ENCODE measurements at regions of chr2 and their contacts with region 1.

Region 1: GRCh38 chr2:135960656-135961551 is 24.5 kb downstream of the DARS1 start:
- DNase-seq: peak; percentile 16
- H3K4me3 Mint-ChIP-seq: peak overlapping the region; percentile 28
- H3K27ac Mint-ChIP-seq: peak overlapping the region; percentile 80
- H3K4me1 Mint-ChIP-seq: peaks cover 55% of the 10 kb centered on the region
- H3K27me3 Mint-ChIP-seq: no peaks in the 10 kb centered on the region

Region 2: DNA sequence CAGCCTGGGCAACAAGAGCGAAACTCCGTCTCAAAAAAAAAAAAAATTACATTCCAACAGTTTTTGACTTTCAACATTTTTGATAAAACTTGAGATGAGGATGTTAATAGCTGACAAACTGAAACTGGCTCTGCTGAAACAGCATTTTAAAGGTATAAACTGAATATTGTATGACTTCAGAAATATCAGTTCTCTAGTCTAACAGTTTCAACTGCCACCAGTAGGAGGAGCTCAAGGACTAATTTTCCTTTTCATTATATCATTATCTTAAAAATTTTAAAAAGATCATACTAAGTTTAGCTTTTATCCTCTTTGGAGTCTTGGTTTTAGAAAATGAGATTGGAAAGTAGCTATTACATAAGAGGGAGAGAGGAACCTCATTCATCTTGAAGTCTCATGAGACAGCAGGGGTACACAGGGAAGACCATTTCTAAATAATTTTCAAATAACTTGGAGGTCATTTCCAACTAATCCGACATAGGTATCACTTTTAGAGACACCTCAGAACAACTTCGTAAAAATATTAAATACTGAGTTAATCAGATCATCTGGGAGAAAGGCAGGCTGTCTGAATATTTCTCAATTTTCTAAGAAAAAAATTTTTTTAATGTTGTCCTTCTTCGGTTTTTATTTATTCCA is 47.1 kb before region 1 on chr2:
- intact Hi-C with region 1: loop called (anchors 2 kb)
- DNase-seq: no peak
- H3K4me3 Mint-ChIP-seq: no peak overlapping the region
- H3K27ac Mint-ChIP-seq: no peak overlapping the region
- H3K4me1 Mint-ChIP-seq: peaks cover 27% of the 10 kb centered on the region
- H3K27me3 Mint-ChIP-seq: no peaks in the 10 kb centered on the region

Region 3: GRCh38 chr2:135948642-135949355 is 12.1 kb before region 1 on chr2:
- intact Hi-C with region 1: loop called (anchors 1 kb)
- DNase-seq: no peak
- H3K4me3 Mint-ChIP-seq: peak overlapping the region; percentile 53
- H3K27ac Mint-ChIP-seq: peak overlapping the region; percentile 87
- H3K4me1 Mint-ChIP-seq: peaks cover 58% of the 10 kb centered on the region
- H3K27me3 Mint-ChIP-seq: no peaks in the 10 kb centered on the region

Measured in activated T-helper 1 cell treated with anti-CD3 and anti-CD28 coated beads, Interleukin-12 subunit alpha, Interleukin-12 subunit beta, Interleukin-2, Interleukin-4 antibody, amounts not matched to agents 30 ng/mL and 10 ng/mL and 1 ng/mL, durations not matched to agents 14 hours and 24 hours and 36 hours (primary cell).